Naive thymus-derived CD4-positive, alpha-beta T cell (primary cell): ENCODE measurements at regions of chr2 and their contacts with region 1.

Region 1: DNA sequence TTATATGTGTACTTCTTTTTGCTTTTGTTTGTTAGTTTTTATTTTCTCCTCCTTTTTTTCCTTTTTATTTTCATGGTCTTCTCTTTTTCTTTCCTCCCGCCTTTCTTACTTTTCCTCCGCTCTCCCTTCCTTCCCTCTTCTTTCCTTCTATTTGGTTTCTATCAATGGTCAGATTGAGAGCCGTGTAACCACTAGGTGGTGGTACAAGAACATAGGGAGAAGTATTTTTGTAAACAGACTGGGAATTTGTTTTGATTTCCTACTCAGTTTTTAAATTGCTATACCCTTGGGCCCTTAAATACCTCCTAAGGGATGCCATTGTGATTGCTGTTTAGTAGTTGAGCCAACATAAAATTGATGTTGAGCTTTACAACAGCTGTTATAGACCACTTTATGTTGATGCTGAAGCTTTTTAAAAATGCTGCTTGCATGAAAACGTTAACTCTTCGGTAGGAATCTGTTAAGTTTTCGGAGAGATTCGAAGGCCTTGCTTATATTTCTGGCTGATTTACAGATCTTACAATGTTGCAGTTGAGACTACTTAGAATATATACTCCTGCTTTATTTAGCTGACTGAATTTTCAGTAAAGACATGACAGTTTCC is 124.2 kb downstream of the UBE2E3 start:
- DNase-seq: peak in 7 of 9 donors; percentile 14 to 66 (median 54)
- ATAC-seq: peak; percentile 64
- H3K4me3 ChIP-seq: no peak overlapping the region
- H3K4me3 Mint-ChIP-seq: peak overlapping the region in 7 of 10 donors; percentile 0 to 27 (median 11)
- H3K27ac ChIP-seq: no peak overlapping the region
- H3K27ac Mint-ChIP-seq: peak overlapping the region in 7 of 9 donors; percentile 4 to 35 (median 27)
- H3K4me1 ChIP-seq: peaks cover 30 to 34% of the 10 kb centered on the region in 2 donors
- H3K4me1 Mint-ChIP-seq: peaks cover 11 to 48% (median 37%) of the 10 kb centered on the region in 7 donors
- H3K27me3 ChIP-seq: no peaks in the 10 kb centered on the region
- H3K27me3 Mint-ChIP-seq: peaks cover 0 to 4% (median 3%) of the 10 kb centered on the region in 5 donors

Region 2: GRCh38 chr2:180604077-180604476 is 500.5 kb before region 1 on chr2:
- CTCF ChIA-PET with region 1: no interaction called
- POLR2A ChIA-PET with region 1: no interaction called
- intact Hi-C with region 1: no loop called
- DNase-seq: no peak
- ATAC-seq: peak; percentile 34
- H3K4me3 ChIP-seq: no peak overlapping the region
- H3K4me3 Mint-ChIP-seq: no peak overlapping the region
- H3K27ac ChIP-seq: no peak overlapping the region
- H3K27ac Mint-ChIP-seq: no peak overlapping the region
- H3K4me1 ChIP-seq: no peaks in the 10 kb centered on the region
- H3K4me1 Mint-ChIP-seq: no peaks in the 10 kb centered on the region
- H3K27me3 ChIP-seq: no peaks in the 10 kb centered on the region
- H3K27me3 Mint-ChIP-seq: peaks cover 0 to 5% (median 0%) of the 10 kb centered on the region in 5 donors

Region 3: DNA sequence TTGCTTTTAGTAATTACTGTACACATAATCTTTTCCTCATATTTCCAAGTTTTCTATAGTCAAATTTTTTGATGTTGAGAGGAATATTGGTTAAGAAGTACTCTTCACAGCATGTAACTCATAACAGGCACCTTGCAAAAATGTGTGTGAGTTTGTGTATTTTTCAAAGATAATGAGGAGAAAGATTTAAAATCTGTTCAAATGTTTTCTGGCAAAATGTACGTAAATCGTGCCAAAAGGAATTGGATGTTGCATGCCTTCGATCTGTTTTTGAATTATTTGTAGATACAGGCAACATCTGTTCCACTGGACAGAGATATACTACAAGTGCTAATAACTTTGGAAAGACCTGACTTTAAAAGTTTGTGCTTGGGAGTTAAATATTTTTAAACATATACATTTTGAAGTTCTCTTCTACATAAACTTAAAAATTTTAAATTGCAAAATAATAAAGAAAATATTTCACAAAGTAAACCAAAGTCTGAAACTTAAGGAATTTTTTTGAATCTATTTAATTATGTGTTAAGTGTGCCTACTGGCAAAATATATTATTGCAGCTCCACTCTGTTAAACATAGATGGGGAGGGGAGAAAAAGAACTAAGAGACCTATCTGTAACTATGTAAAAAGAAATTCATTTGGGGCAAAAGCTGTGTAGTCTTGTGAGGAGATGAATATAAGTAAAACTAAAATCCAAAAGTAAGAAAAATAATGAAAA is 257.7 kb before region 1 on chr2:
- CTCF ChIA-PET with region 1: no interaction called
- POLR2A ChIA-PET with region 1: no interaction called
- intact Hi-C with region 1: no loop called
- DNase-seq: no peak
- ATAC-seq: no peak
- H3K4me3 ChIP-seq: no peak overlapping the region
- H3K4me3 Mint-ChIP-seq: no peak overlapping the region
- H3K27ac ChIP-seq: no peak overlapping the region
- H3K27ac Mint-ChIP-seq: no peak overlapping the region
- H3K4me1 ChIP-seq: no peaks in the 10 kb centered on the region
- H3K4me1 Mint-ChIP-seq: no peaks in the 10 kb centered on the region
- H3K27me3 ChIP-seq: no peaks in the 10 kb centered on the region
- H3K27me3 Mint-ChIP-seq: peaks cover 0 to 5% (median 0%) of the 10 kb centered on the region in 5 donors

Region 4: GRCh38 chr2:181116251-181116650 is 11.6 kb after region 1 on chr2:
- CTCF ChIA-PET with region 1: interaction called, 25 read pairs
- POLR2A ChIA-PET with region 1: interaction called, 5 read pairs
- intact Hi-C with region 1: loop called (anchors 1 kb)
- DNase-seq: no peak
- ATAC-seq: no peak
- H3K4me3 ChIP-seq: no peak overlapping the region
- H3K4me3 Mint-ChIP-seq: no peak overlapping the region
- H3K27ac ChIP-seq: no peak overlapping the region
- H3K27ac Mint-ChIP-seq: peak overlapping the region in 1 of 9 donors; percentile 56
- H3K4me1 ChIP-seq: peaks cover 0 to 6% of the 10 kb centered on the region in 2 donors
- H3K4me1 Mint-ChIP-seq: peaks cover 10 to 40% (median 32%) of the 10 kb centered on the region in 7 donors
- H3K27me3 ChIP-seq: no peaks in the 10 kb centered on the region
- H3K27me3 Mint-ChIP-seq: no peaks in the 10 kb centered on the region

Region 5: GRCh38 chr2:181178823-181179412 is 74.3 kb after region 1 on chr2:
- CTCF ChIA-PET with region 1: interaction called, 8 read pairs
- POLR2A ChIA-PET with region 1: interaction called, 5 read pairs
- intact Hi-C with region 1: loop called (anchors 1 to 2 kb)
- DNase-seq: peak in 6 of 9 donors; percentile 14 to 34 (median 30)
- ATAC-seq: peak; percentile 76
- H3K4me3 ChIP-seq: no peak overlapping the region
- H3K4me3 Mint-ChIP-seq: peak overlapping the region in 2 of 10 donors; percentile 19 to 25
- H3K27ac ChIP-seq: no peak overlapping the region
- H3K27ac Mint-ChIP-seq: peak overlapping the region in 8 of 9 donors; percentile 1 to 65 (median 44)
- H3K4me1 ChIP-seq: peaks cover 15 to 16% of the 10 kb centered on the region in 2 donors
- H3K4me1 Mint-ChIP-seq: peaks cover 7 to 58% (median 45%) of the 10 kb centered on the region in 7 donors
- H3K27me3 ChIP-seq: no peaks in the 10 kb centered on the region
- H3K27me3 Mint-ChIP-seq: no peaks in the 10 kb centered on the region

Region 6: DNA sequence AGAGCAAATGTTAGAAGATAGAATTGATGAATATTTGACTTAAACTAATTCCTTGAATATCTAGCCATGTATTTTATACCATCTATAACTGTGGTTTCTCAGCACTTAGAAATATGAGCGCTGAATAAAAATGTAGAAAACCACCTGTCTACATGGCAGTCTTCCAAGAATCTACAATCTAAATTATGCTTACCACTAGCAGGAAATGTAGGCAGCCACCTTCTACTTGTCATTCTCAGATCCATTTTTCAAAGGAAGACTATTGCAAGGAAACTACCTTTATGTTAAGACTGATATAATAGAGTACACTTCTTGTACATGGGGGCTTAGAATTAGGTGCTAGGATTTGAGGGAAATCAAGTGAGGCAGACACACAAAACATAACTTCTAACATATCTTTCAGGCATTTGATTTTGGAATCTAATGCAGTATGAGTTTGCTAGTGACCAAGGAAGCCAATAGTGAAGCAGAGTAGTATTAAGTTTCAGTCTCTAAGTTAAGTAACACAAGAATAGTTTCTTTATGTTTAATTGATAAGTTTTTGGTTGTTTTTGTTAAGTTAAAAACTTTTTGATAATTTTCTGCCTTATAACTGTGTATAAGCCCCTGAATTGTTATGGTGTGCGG is 176.7 kb after region 1 on chr2:
- CTCF ChIA-PET with region 1: interaction called, 11 read pairs
- POLR2A ChIA-PET with region 1: no interaction called
- intact Hi-C with region 1: loop called (anchors 1 to 2 kb)
- DNase-seq: peak in 7 of 9 donors; percentile 47 to 84 (median 70)
- ATAC-seq: peak; percentile 92
- H3K4me3 ChIP-seq: no peak overlapping the region
- H3K4me3 Mint-ChIP-seq: peak overlapping the region in 9 of 10 donors; percentile 10 to 74 (median 62)
- H3K27ac ChIP-seq: peak overlapping the region; percentile 17
- H3K27ac Mint-ChIP-seq: peak overlapping the region; percentile 75 to 95 (median 84)
- H3K4me1 ChIP-seq: peaks cover 18 to 31% of the 10 kb centered on the region in 2 donors
- H3K4me1 Mint-ChIP-seq: peaks cover 24 to 69% (median 58%) of the 10 kb centered on the region in 7 donors
- H3K27me3 ChIP-seq: no peaks in the 10 kb centered on the region
- H3K27me3 Mint-ChIP-seq: no peaks in the 10 kb centered on the region

Region 7: DNA sequence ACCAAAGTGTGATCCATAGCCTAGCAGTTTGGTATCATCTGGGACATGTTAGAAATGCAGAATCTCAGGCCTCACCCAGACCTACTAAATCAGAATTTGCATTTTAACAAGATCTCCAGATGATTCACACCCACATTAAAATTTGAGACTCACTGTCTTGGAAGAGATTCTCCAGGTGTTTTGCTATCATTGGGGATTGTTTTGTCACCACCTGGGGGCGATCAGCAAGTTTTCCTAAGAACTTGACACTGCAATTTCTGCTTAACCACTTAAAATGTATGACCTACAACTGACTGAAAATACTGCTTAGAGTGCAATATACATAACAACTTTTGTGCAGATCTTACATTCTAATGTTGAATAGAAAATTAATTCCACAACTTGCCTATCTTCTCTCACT is 333.6 kb after region 1 on chr2:
- CTCF ChIA-PET with region 1: interaction called, 4 read pairs
- POLR2A ChIA-PET with region 1: no interaction called
- intact Hi-C with region 1: loop called in 1 of 2 experiments (anchors 1 kb)
- DNase-seq: peak in 1 of 9 donors; percentile 34
- ATAC-seq: peak; percentile 37
- H3K4me3 ChIP-seq: no peak overlapping the region
- H3K4me3 Mint-ChIP-seq: no peak overlapping the region
- H3K27ac ChIP-seq: no peak overlapping the region
- H3K27ac Mint-ChIP-seq: peak overlapping the region in 1 of 9 donors; percentile 45
- H3K4me1 ChIP-seq: no peaks in the 10 kb centered on the region
- H3K4me1 Mint-ChIP-seq: peaks cover 0 to 28% (median 15%) of the 10 kb centered on the region in 7 donors
- H3K27me3 ChIP-seq: no peaks in the 10 kb centered on the region
- H3K27me3 Mint-ChIP-seq: peaks cover 0 to 2% (median 0%) of the 10 kb centered on the region in 5 donors

Region 8: DNA sequence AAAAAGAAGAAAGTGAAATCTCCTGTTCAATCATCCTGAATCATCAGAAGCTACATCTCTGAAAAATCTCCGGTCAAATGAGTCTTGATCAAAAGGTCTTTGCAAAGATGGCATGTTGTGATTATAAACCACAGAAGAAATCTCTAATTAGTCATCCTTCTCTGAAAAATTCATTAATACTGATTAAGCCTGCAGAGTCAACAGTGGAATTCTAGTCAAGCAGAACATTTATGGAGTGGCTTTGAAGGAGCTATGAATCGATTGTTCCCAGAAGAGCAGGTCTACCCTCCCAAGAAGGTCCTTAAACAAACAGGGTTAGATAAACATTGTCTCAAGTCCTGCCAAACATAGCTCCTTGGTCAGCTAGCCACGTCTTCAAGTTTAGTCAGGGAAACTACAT is 441.4 kb after region 1 on chr2:
- CTCF ChIA-PET with region 1: no interaction called
- POLR2A ChIA-PET with region 1: no interaction called
- intact Hi-C with region 1: no loop called
- DNase-seq: no peak
- ATAC-seq: no peak
- H3K4me3 ChIP-seq: no peak overlapping the region
- H3K4me3 Mint-ChIP-seq: no peak overlapping the region
- H3K27ac ChIP-seq: no peak overlapping the region
- H3K27ac Mint-ChIP-seq: no peak overlapping the region
- H3K4me1 ChIP-seq: no peaks in the 10 kb centered on the region
- H3K4me1 Mint-ChIP-seq: peaks cover 0 to 3% (median 0%) of the 10 kb centered on the region in 7 donors
- H3K27me3 ChIP-seq: no peaks in the 10 kb centered on the region
- H3K27me3 Mint-ChIP-seq: no peaks in the 10 kb centered on the region

Region 9: GRCh38 chr2:181715033-181715630 is 610.5 kb after region 1 on chr2:
- CTCF ChIA-PET with region 1: interaction called, 18 read pairs
- POLR2A ChIA-PET with region 1: no interaction called
- intact Hi-C with region 1: loop called in 1 of 2 experiments (anchors 1 kb)
- DNase-seq: peak; percentile 30 to 78 (median 64)
- ATAC-seq: peak; percentile 90
- H3K4me3 ChIP-seq: no peak overlapping the region
- H3K4me3 Mint-ChIP-seq: no peak overlapping the region
- H3K27ac ChIP-seq: no peak overlapping the region
- H3K27ac Mint-ChIP-seq: no peak overlapping the region
- H3K4me1 ChIP-seq: no peaks in the 10 kb centered on the region
- H3K4me1 Mint-ChIP-seq: no peaks in the 10 kb centered on the region
- H3K27me3 ChIP-seq: no peaks in the 10 kb centered on the region
- H3K27me3 Mint-ChIP-seq: peaks cover 0 to 11% (median 0%) of the 10 kb centered on the region in 5 donors

Region 10: DNA sequence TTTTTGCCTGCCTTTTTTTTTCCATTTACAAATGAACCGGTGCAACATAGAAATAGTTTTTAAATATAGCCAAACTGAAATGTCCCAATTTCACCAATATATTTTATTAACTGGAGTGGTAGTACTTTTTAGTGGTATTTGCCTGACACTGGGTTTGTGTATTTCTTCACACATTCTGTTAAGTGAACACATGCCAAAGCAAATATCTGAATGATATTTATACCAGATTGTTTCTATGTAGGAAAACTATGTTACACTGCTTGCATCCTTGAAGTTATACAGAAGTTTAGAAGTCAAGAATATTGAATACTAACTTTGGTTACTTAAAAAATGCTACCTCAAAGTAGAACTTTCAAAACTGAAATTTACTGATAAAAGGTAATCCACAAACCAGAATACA is 767.6 kb after region 1 on chr2:
- CTCF ChIA-PET with region 1: no interaction called
- POLR2A ChIA-PET with region 1: no interaction called
- intact Hi-C with region 1: no loop called
- DNase-seq: no peak
- ATAC-seq: no peak
- H3K4me3 ChIP-seq: no peak overlapping the region
- H3K4me3 Mint-ChIP-seq: no peak overlapping the region
- H3K27ac ChIP-seq: no peak overlapping the region
- H3K27ac Mint-ChIP-seq: no peak overlapping the region
- H3K4me1 ChIP-seq: no peaks in the 10 kb centered on the region
- H3K4me1 Mint-ChIP-seq: no peaks in the 10 kb centered on the region
- H3K27me3 ChIP-seq: no peaks in the 10 kb centered on the region
- H3K27me3 Mint-ChIP-seq: peaks cover 0 to 15% (median 0%) of the 10 kb centered on the region in 5 donors